ENCODE measurements at regions of chr4 and their contacts with region 1.

Region 1: GRCh38 chr4:77819843-77820648 is 878 bp upstream of the CNOT6L start:
- DNase-seq: peak; percentile 96
- ATAC-seq: peak; percentile 84
- H3K4me3 Mint-ChIP-seq: peak overlapping the region; percentile 98
- H3K27ac Mint-ChIP-seq: peak overlapping the region; percentile 97
- H3K4me1 Mint-ChIP-seq: peaks cover 39% of the 10 kb centered on the region
- H3K27me3 Mint-ChIP-seq: no peaks in the 10 kb centered on the region

Region 2: GRCh38 chr4:77800483-77801259 is 19.4 kb before region 1 on chr4:
- CTCF ChIA-PET with region 1: interaction called, 14 read pairs
- DNase-seq: no peak
- ATAC-seq: peak; percentile 68
- H3K4me3 Mint-ChIP-seq: peak overlapping the region; percentile 70
- H3K27ac Mint-ChIP-seq: peak overlapping the region; percentile 86
- H3K4me1 Mint-ChIP-seq: peaks cover 44% of the 10 kb centered on the region
- H3K27me3 Mint-ChIP-seq: no peaks in the 10 kb centered on the region

Region 3: DNA sequence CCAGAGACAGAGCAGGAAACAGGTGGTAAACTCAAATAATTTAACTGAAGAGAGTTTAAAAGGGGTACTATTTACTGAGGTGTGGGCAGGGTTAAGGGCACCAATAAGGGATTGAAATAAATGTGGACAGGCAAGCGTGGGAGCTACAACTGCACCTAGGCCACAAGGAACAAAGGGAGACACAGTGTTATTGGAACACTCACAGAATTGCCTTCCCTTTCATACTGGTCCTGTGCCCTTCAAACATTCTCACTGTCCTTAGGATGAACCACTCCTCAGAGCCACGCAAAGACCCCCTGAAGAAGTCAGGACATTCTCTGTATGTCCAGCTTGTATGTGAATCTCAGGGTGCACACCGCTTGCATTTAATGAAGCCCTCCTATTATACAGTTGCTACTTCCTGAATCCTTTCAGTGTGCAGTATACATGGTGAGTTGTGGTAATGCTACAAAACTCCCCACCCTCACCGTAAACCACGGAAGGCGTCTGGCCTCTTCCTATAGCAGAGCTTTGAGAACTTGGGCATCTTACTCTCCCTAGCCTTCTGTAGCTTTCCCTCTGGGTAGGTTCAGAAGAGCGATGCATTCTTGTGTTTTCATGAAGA is 32.9 kb after region 1 on chr4:
- CTCF ChIA-PET with region 1: interaction called, 15 read pairs
- DNase-seq: peak; percentile 90
- ATAC-seq: peak; percentile 88
- H3K4me3 Mint-ChIP-seq: peak overlapping the region; percentile 74
- H3K27ac Mint-ChIP-seq: peak overlapping the region; percentile 96
- H3K4me1 Mint-ChIP-seq: peaks cover 56% of the 10 kb centered on the region
- H3K27me3 Mint-ChIP-seq: no peaks in the 10 kb centered on the region

Region 4: GRCh38 chr4:77862478-77863216 is 42.6 kb after region 1 on chr4 and contains the start of gene MRPL1:
- CTCF ChIA-PET with region 1: interaction called, 32 read pairs
- DNase-seq: peak; percentile 93
- ATAC-seq: peak; percentile 79
- H3K4me3 Mint-ChIP-seq: peak within 1 kb of the TSS; percentile 94
- H3K27ac Mint-ChIP-seq: peak within 1 kb of the TSS; percentile 99
- H3K4me1 Mint-ChIP-seq: peaks cover 51% of the 10 kb centered on the region
- H3K27me3 Mint-ChIP-seq: peaks cover 4% of the 10 kb centered on the region
- total RNA-seq, gene MRPL1: 28.5 to 43.2 TPM